Activated T-helper 1 cell treated with anti-CD3 and anti-CD28 coated beads, Interleukin-12 subunit alpha, Interleukin-12 subunit beta, Interleukin-2, Interleukin-4 antibody, amounts not matched to agents 30 ng/mL and 10 ng/mL and 1 ng/mL, durations not matched to agents 14 hours and 24 hours and 36 hours (primary cell): ENCODE measurements at regions of chr13 and their contacts with region 1.

Region 1: GRCh38 chr13:19863323-19864023 is at the start of gene ZMYM5:
- DNase-seq: peak; percentile 95
- H3K4me3 Mint-ChIP-seq: peak within 1 kb of the TSS; percentile 99
- H3K27ac Mint-ChIP-seq: peak within 1 kb of the TSS; percentile 97
- H3K4me1 Mint-ChIP-seq: peaks cover 43% of the 10 kb centered on the region
- H3K27me3 Mint-ChIP-seq: peaks cover 3% of the 10 kb centered on the region
- total RNA-seq, gene ZMYM5: 12.2 and 14.2 TPM in 2 replicates

Region 2: DNA sequence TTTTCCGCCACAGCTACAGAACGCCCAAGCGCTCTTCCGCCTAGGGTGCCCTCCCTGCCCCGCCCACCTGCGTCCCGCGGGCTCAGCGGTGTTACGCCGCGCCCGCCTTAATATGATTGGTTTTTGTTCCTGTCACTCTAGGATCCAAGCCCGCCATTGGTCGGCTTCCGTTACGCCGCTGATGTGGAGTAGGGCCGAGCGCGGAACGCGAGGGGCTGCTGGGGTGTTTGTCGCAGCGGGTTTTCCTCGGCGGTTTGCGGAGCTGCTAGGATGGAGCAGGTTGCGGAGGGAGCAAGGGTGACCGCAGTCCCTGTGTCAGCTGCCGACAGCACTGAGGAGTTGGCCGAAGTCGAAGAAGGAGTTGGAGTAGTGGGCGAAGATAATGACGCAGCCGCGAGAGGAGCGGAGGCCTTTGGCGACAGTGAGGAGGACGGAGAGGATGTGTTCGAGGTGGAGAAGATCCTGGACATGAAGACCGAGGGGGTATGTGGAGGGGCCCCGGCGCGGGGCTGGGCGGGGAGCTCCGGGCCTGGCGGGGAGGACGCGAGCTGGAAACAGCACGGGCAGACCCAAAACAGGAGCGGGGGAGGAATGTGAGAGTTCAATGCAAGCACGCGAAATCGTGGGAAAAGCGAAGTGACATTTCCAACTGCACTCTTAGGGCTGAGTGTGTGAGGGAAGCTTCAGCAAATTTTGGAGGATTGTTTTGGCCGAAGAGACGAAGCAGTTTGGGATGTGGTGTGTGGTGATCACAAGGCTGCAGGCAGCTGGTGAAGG is 229.8 kb before region 1 on chr13 and contains the start of gene MPHOSPH8:
- intact Hi-C with region 1: loop called (anchors 1 kb)
- DNase-seq: peak; percentile 91
- H3K4me3 Mint-ChIP-seq: peak within 1 kb of the TSS; percentile 98
- H3K27ac Mint-ChIP-seq: peak within 1 kb of the TSS; percentile 98
- H3K4me1 Mint-ChIP-seq: peaks cover 26% of the 10 kb centered on the region
- H3K27me3 Mint-ChIP-seq: no peaks in the 10 kb centered on the region
- total RNA-seq, gene MPHOSPH8: 42.9 and 44.3 TPM in 2 replicates

Region 3: GRCh38 chr13:19782049-19782726 is 81.3 kb before region 1 on chr13:
- intact Hi-C with region 1: loop called (anchors 1 kb)
- DNase-seq: peak; percentile 60
- H3K4me3 Mint-ChIP-seq: peak overlapping the region; percentile 97
- H3K27ac Mint-ChIP-seq: peak overlapping the region; percentile 97
- H3K4me1 Mint-ChIP-seq: peaks cover 17% of the 10 kb centered on the region
- H3K27me3 Mint-ChIP-seq: peaks cover 5% of the 10 kb centered on the region

Region 4: GRCh38 chr13:20902438-20903163 is 1039.1 kb after region 1 on chr13 and contains the start of gene XPO4:
- intact Hi-C with region 1: loop called (anchors 10 kb)
- DNase-seq: peak; percentile 80
- H3K4me3 Mint-ChIP-seq: peak within 1 kb of the TSS; percentile 99
- H3K27ac Mint-ChIP-seq: peak within 1 kb of the TSS; percentile 94
- H3K4me1 Mint-ChIP-seq: peaks cover 32% of the 10 kb centered on the region
- H3K27me3 Mint-ChIP-seq: peaks cover 6% of the 10 kb centered on the region
- total RNA-seq, gene XPO4: 33.5 and 34.1 TPM in 2 replicates